MCF 10A (cell line): ENCODE measurements at regions of chr1 and their contacts with region 1.

Region 1: GRCh38 chr1:174217787-174218574 is 58.7 kb downstream of the RABGAP1L start:
- DNase-seq: peak; percentile 61
- H3K4me3 Mint-ChIP-seq: no peak overlapping the region
- H3K27ac Mint-ChIP-seq: no peak overlapping the region
- H3K4me1 Mint-ChIP-seq: peaks cover 6% of the 10 kb centered on the region
- H3K27me3 Mint-ChIP-seq: no peaks in the 10 kb centered on the region
- CTCF ChIP-seq: peak; percentile 90

Region 2: GRCh38 chr1:173420330-173420806 is 797.6 kb before region 1 on chr1:
- CTCF ChIA-PET with region 1: no interaction called
- POLR2A ChIA-PET with region 1: no interaction called
- intact Hi-C with region 1: loop called (anchors 5 kb)
- DNase-seq: peak; percentile 91
- H3K4me3 Mint-ChIP-seq: no peak overlapping the region
- H3K27ac Mint-ChIP-seq: peak overlapping the region; percentile 9
- H3K4me1 Mint-ChIP-seq: peaks cover 22% of the 10 kb centered on the region
- H3K27me3 Mint-ChIP-seq: no peaks in the 10 kb centered on the region
- CTCF ChIP-seq: peak; percentile 94

Region 3: GRCh38 chr1:173970252-173970651 is 247.7 kb before region 1 on chr1:
- CTCF ChIA-PET with region 1: interaction called, 12 read pairs
- POLR2A ChIA-PET with region 1: no interaction called
- intact Hi-C with region 1: no loop called
- DNase-seq: no peak
- H3K4me3 Mint-ChIP-seq: no peak overlapping the region
- H3K27ac Mint-ChIP-seq: no peak overlapping the region
- H3K4me1 Mint-ChIP-seq: no peaks in the 10 kb centered on the region
- H3K27me3 Mint-ChIP-seq: no peaks in the 10 kb centered on the region
- CTCF ChIP-seq: no peak

Region 4: DNA sequence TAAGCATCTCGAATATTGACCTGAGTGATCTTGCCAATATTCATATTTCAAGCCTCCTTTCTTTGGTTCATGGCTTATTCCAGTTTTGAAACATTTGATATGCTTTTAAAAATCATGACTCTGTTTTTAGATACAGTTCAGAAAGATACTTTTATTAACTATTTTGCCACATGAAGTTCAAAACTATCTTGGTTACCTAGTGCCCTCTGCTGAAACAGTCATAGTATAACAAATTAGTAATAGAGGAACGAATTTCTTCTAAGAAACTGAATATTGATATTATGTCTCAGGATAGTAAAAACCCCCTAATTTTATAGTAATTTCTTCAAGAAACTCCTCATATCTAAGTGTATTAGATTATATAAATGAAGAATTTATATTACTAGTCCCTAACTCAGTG is 143.2 kb before region 1 on chr1:
- CTCF ChIA-PET with region 1: interaction called, 11 read pairs
- POLR2A ChIA-PET with region 1: interaction called, 4 read pairs
- intact Hi-C with region 1: loop called (anchors 1 kb)
- DNase-seq: peak; percentile 52
- H3K4me3 Mint-ChIP-seq: no peak overlapping the region
- H3K27ac Mint-ChIP-seq: no peak overlapping the region
- H3K4me1 Mint-ChIP-seq: no peaks in the 10 kb centered on the region
- H3K27me3 Mint-ChIP-seq: peaks cover 16% of the 10 kb centered on the region
- CTCF ChIP-seq: peak; percentile 68

Region 5: DNA sequence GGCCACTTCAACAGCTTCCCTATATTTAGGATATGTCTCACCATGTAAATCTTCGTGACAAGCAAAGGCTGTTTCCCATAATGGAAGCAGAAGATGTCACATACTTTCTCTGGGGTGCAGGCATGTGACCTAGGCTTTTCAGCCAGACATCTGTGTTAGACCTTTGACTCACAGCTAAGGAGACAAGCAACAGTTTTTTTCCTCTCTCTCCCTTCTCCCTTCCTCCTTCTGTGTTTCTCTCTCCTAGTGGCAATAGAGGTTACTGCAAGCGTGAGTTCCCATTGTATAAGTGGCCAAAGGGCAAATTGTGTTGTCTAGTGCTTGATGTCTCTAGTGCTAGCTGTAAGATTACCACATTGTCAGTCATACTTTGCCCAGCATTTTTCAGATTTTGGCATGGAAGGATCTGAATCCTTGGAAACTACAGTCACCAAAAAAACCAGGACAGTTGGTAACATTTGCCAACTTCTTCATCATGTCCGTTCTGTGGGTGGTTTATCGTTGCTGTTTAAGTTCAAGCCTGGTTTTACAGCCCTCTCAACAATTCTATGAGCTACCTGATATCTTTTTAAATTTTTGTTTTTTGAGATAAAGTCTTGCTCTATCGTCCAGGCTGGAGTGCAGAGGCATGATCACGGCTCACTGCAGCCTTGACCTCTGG is 103.1 kb before region 1 on chr1:
- CTCF ChIA-PET with region 1: interaction called, 17 read pairs
- POLR2A ChIA-PET with region 1: interaction called, 4 read pairs
- intact Hi-C with region 1: no loop called
- DNase-seq: peak; percentile 92
- H3K4me3 Mint-ChIP-seq: no peak overlapping the region
- H3K27ac Mint-ChIP-seq: no peak overlapping the region
- H3K4me1 Mint-ChIP-seq: peaks cover 6% of the 10 kb centered on the region
- H3K27me3 Mint-ChIP-seq: no peaks in the 10 kb centered on the region
- CTCF ChIP-seq: peak; percentile 71

Region 6: DNA sequence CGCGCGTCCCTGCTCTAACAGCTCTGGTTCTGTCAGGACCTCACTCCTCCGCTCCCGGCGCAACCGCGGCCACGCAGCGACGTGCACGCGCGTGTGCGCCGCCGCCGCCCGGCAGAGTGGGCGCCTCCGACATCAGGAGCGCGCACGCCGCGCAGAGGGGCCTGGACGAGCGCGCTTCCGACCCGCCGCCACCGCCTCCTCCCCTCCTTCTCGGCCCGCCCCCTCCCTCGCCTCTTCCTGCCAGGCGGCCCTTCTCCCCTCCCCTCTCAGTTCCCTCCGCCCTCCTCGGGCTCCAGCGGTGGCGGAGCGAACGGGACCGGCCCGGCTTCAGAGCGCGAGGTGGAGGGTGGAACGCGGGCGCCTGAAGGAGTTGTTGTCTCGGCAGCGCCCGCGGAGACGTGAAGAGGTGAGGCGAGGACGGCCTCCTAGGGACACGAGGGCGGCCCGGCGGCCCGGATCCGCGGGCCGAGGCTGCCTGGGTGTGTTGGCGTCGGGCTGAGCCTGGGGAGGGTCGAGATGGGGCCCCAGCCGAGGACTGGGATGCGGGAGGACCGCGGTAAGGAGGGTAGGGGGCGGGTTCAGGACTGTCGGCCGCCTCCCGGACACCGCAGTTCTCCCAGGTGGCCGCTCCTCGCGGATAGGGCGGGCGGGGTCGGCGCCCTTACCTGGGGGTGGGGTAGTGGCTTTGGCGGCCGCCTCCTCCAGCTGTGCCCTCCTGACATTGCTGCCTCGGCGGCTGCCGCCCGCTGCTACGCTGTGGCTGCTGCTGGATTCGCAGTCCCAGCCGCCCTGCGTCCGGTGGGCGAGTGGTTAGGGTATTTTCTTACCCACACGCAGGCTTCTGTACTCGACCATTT is 58.5 kb before region 1 on chr1 and contains the start of gene RABGAP1L:
- CTCF ChIA-PET with region 1: interaction called, 5 read pairs
- POLR2A ChIA-PET with region 1: interaction called, 26 read pairs
- intact Hi-C with region 1: loop called (anchors 1 kb)
- DNase-seq: peak; percentile 96
- H3K4me3 Mint-ChIP-seq: peak within 1 kb of the TSS; percentile 97
- H3K27ac Mint-ChIP-seq: peak within 1 kb of the TSS; percentile 71
- H3K4me1 Mint-ChIP-seq: peaks cover 42% of the 10 kb centered on the region
- H3K27me3 Mint-ChIP-seq: no peaks in the 10 kb centered on the region
- CTCF ChIP-seq: no peak
- total RNA-seq, gene RABGAP1L: 18.2 and 19.0 TPM in 2 replicates